ENCODE measurements at regions of chr1 and their contacts with region 1.

Region 1: DNA sequence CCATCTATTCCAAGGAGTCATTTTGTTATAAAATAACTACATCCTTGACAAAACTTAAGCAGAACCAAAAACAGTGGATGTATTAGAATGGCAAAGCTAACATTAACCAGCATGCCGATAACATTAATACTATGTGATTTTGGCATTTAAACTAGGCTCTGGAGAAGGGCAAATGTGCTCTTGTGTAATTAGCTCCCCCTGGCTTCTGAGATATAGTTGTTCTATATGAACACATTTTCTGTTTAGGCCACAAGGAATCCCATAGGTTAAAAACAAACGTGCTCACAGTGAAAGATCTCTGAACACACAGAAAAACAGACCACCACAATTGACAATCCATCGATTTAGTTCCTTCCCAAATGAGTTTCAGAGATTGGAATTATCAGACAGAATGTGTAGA is 57.4 kb upstream of the TARS2 start:
- DNase-seq: no peak
- ATAC-seq: peak; percentile 60
- H3K4me3 Mint-ChIP-seq: no peak overlapping the region
- H3K27ac Mint-ChIP-seq: peak overlapping the region; percentile 16
- H3K4me1 Mint-ChIP-seq: peaks cover 7% of the 10 kb centered on the region
- H3K27me3 Mint-ChIP-seq: no peaks in the 10 kb centered on the region

Region 2: GRCh38 chr1:150121236-150121862 is 308.5 kb before region 1 on chr1:
- CTCF ChIA-PET with region 1: no interaction called
- POLR2A ChIA-PET with region 1: no interaction called
- intact Hi-C with region 1: no loop called
- DNase-seq: no peak
- ATAC-seq: no peak
- H3K4me3 Mint-ChIP-seq: no peak overlapping the region
- H3K27ac Mint-ChIP-seq: no peak overlapping the region
- H3K4me1 Mint-ChIP-seq: peaks cover 14% of the 10 kb centered on the region
- H3K27me3 Mint-ChIP-seq: no peaks in the 10 kb centered on the region

Region 3: GRCh38 chr1:150415800-150416199 is 14.0 kb before region 1 on chr1:
- CTCF ChIA-PET with region 1: interaction called, 5 read pairs
- POLR2A ChIA-PET with region 1: no interaction called
- intact Hi-C with region 1: loop called in 1 of 2 experiments (anchors 2 kb)
- DNase-seq: no peak
- ATAC-seq: no peak
- H3K4me3 Mint-ChIP-seq: no peak overlapping the region
- H3K27ac Mint-ChIP-seq: no peak overlapping the region
- H3K4me1 Mint-ChIP-seq: peaks cover 53% of the 10 kb centered on the region
- H3K27me3 Mint-ChIP-seq: no peaks in the 10 kb centered on the region